Aorta (tissue), 5 donors: ENCODE measurements at regions of chr20 and their contacts with region 1.

Region 1: GRCh38 chr20:62744741-62745191 is 36.1 kb downstream of the NTSR1 start:
- DNase-seq: peak; percentile 26 to 57
- ATAC-seq: no peak
- H3K4me3 ChIP-seq: no peak overlapping the region
- H3K27ac ChIP-seq: no peak overlapping the region
- H3K4me1 ChIP-seq: no peaks in the 10 kb centered on the region
- H3K27me3 ChIP-seq: no peaks in the 10 kb centered on the region

Region 2: GRCh38 chr20:62675156-62675876 is 69.5 kb before region 1 on chr20:
- intact Hi-C with region 1: no loop called
- DNase-seq: peak in 1 of 2 donors; percentile 48
- ATAC-seq: no peak
- H3K4me3 ChIP-seq: no peak overlapping the region
- H3K27ac ChIP-seq: no peak overlapping the region
- H3K4me1 ChIP-seq: no peaks in the 10 kb centered on the region
- H3K27me3 ChIP-seq: no peaks in the 10 kb centered on the region

Region 3: GRCh38 chr20:62692176-62692575 is 52.6 kb before region 1 on chr20:
- intact Hi-C with region 1: loop called in 1 of 2 experiments (anchors 5 kb)
- DNase-seq: no peak
- ATAC-seq: no peak
- H3K4me3 ChIP-seq: no peak overlapping the region
- H3K27ac ChIP-seq: no peak overlapping the region
- H3K4me1 ChIP-seq: no peaks in the 10 kb centered on the region
- H3K27me3 ChIP-seq: no peaks in the 10 kb centered on the region

Region 4: DNA sequence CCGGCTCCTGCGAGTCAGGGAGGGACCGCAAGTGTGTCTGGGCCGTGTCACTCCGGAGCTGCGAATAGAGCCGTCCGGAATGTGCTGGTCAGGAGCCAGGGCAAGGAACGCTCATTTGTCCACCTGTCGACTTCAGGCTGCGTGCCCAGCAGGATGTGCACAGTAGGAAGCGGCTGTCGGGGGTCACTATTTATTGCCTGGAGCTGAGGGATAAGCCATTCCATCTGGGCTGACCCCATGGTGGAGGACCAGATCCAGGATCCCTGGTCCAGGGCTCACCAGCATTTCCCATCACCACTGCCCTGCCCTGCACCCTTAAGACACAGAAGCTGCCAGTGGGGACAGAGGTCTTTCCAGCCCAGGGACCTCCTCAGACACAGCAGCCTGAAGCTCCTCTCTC is 21.4 kb before region 1 on chr20:
- intact Hi-C with region 1: no loop called
- DNase-seq: no peak
- ATAC-seq: no peak
- H3K4me3 ChIP-seq: no peak overlapping the region
- H3K27ac ChIP-seq: no peak overlapping the region
- H3K4me1 ChIP-seq: no peaks in the 10 kb centered on the region
- H3K27me3 ChIP-seq: no peaks in the 10 kb centered on the region